ENCODE measurements at regions of chr6 and their contacts with region 1.

Region 1: DNA sequence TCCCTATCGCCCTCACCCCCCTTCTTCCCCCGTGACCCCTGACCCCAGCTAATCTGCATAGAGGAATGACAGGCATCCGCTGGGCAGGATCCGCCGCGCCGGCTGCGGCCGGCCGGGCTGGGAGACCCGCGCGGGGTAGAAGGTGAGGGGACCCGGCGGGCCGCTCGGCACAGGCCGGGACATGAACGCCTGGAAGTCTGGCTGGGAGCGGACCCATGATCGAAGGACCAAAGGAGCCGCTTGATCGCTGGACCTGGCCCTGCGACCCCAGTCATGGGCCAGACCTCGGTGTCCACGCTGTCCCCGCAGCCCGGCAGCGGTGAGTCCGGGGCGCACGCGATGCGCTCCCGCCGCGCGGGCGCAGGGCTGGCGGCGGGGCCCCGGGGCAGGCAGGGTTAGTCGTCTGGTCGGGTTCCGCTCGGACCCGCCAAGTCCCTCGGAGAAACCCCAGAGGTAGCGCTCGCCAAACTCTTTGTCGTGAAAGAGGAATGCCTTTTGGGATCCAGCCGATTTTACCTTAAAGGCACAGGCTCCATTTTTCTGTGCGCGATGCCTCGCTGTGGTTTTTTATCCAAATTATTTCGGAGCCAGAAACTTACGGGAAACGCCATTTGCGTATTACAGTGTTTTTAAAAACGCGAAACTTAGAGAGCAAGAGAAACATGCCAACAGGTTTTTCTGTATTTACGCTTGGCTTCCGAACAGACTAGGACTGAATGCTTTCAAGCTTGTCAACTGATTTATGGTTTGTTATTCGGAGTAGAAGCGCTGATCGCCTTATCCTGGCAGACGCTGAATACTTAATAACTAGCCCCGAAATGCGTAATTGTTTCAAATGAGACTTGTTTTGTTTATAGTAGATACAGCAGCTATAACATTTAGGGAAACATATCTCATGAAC is at the start of gene PHACTR2:
- DNase-seq: peak; percentile 89
- ATAC-seq: peak; percentile 92
- total RNA-seq, gene PHACTR2: 75.9 TPM

Region 2: DNA sequence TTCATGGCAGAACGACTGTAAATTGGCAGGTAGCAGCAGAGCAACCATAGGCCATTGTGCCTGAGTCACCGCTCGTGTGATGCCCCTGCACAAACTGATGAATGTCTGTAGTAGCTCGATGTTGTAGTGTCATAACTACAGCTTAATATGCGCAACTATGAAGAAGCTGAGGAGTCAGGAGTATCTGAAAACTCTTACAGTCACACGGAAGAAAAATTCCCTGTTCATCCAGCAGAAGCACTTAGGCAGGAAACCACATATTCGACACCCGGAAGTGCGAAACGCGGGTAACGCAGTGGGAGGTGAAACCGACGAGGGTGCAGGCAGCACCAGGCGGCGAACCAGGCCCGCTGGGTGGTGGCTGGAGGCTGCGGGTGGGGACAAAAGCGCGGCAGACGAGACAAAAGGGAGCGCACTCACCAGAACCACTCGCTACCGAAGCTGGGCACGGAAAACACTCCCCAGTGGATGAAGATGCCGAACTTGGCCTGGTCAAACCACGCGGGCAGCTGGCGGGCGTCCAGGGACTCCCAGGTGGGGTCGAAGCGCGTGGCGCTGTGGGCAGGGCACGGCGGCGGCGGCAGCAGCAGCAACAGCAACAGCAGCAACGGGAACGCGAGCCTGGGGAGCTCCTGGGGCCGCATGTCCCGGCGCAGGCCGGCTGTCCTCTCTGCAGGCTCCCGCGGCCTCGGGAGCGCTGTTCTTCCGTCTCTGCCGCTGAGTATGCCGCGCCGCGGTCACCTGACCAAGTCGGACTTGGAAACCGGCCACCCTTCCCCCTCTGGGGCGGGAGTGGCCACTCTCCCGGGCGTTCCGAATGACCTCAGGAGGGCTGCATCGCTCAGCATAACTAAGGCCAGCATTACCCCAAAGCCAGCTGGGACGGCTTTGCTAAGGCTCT is 166.9 kb before region 1 on chr6 and contains the start of gene FUCA2:
- intact Hi-C with region 1: no loop called
- DNase-seq: peak; percentile 96
- ATAC-seq: peak; percentile 92
- total RNA-seq, gene FUCA2: 46.1 TPM

Region 3: GRCh38 chr6:143598466-143599080 is 79.6 kb before region 1 on chr6:
- intact Hi-C with region 1: loop called (anchors 5 kb)
- DNase-seq: no peak
- ATAC-seq: no peak

Region 4: DNA sequence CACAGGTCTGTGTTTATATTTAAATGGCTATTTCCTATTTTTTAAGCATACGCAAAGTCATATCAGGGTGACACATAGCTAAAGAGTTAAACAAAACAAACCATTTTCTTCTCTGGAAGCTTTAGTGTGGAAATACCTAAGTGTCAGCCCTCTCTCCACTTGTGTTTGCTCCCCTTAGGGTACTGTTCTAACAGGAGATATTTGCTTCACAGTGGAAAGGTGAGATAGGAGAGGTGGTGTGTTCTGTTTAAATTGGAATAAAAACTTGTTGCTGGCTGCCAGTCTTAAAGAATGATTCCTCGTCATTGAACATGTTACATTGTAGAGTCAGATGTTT is 18.5 kb after region 1 on chr6:
- intact Hi-C with region 1: loop called (anchors 2 kb)
- DNase-seq: no peak
- ATAC-seq: no peak

Region 5: DNA sequence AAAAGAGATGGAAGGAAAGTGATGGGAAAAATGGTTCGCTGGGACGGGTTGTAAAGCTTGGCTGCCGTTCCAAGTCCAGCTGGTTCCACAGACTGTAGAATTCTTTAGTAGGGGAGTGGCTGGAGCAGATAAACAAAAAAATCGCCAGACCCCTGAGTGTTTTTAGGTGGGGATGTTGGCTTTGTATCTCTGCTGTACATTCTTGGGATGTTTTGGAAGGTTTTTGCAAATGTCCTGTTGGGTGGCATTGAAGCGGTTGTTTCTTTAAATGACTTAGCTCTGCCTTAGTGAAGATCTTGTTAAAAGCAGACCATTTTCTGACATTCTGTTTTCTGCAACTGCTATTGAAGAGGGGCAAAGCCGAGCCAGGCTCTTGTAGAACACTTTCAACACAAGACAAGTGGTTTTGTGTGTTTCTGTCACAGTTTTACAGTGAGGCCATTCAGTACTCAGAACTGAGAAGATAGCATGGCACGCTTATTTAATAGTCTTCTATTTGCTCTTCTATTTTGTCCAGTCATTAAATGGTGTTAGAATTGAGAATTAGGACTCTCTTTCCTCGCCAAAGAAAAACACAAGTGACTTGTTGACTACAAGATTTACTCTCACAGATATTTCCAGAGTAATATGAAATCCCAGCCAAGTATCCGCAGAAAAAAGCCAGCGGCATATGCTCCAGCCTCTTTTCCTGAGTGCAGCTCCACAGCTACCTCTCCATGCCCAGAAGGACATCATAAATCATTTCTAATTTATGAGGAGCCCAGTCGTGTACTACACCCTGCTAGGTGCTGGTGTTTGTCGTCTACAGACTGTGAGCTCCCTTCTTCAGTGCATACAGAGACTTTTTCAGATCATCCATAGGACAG is 65.4 kb after region 1 on chr6:
- intact Hi-C with region 1: loop called (anchors 5 kb)
- DNase-seq: no peak
- ATAC-seq: peak; percentile 41

Region 6: DNA sequence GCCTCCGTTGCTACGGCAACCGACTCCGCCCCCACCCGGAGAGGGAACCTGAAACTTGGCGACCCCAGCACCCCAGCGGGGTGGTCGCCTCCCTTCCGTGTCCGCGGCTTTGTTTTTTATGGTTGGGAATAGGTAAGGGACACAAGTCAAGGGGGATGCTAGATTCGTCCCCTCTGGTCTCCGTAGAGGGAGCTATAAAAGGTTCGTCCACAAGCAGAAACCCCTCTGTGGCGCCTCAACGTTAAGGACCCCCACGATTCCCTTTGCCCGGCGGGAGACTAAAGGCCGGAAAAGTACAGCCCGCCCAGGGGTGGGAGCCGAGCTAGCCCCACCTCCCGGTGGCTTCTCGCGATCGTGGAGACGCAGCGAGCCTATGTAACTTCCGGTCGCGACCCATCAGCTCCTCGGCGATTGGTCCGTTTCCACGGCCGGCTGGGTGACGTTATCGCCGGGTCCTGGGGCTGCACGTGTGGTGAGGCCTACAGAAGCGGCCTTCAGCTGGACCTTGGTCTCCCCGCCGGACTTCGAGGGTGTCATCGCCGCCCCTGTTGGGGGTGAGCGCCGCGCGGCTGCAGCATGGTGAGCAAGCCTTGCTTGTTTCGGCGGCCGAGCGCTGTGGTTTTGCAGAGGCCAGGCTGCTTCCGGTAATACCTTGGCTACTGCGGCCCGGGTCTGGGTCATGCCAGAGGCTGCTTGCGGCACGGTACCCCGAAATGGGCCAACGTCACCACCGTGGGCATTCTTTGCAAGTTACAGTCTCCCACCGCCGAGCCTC is 164.9 kb after region 1 on chr6 and contains the start of gene LTV1:
- intact Hi-C with region 1: loop called (anchors 1 kb)
- DNase-seq: peak; percentile 98
- ATAC-seq: peak; percentile 100
- total RNA-seq, gene LTV1: 12.4 TPM

Region 7: DNA sequence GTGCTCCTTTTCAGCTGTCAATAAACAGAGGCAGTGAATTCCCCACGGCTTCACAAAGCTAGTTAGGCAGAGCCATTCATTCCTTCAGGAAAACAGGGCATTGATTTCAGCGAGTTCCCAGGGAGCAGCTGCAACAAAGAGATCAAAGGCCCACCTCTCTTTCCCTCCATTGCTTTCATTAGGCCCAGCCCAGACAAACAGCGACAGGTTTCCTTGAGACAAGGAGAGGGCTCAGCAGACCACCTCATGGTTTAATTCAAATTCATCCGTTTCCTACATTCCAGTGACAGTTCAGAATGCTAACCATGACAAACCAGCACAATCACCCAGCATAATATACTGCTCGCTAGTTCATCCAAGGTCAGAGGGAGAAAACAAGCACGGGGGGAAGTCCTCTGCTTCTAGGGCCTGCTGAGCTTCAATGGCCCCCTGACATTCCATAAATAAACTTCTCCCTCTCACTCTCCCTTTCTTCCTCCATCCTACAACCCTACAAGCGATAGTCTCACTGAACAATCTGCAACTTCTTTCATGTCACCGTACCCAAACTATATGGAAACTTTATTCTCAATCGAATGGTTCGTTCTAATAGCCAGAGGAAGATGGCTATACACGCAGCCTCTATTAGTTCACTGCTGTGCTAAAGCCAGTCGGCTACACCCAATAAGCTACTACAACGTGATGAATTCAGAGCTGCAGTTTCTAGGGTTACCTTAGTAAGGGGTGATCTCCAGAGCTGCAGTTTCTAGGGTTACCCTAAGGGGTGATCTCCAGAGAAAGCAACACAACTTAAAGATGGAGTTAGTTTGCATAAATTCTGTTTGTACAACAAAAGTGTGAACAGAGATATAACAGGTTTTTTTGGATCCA is 295.2 kb after region 1 on chr6:
- intact Hi-C with region 1: no loop called
- DNase-seq: no peak
- ATAC-seq: no peak

Region 8: GRCh38 chr6:144008120-144008811 is 330.1 kb after region 1 on chr6 and contains the start of gene PLAGL1:
- intact Hi-C with region 1: loop called (anchors 5 kb)
- DNase-seq: peak; percentile 88
- ATAC-seq: peak; percentile 96
- total RNA-seq, gene PLAGL1: 13.1 TPM

Region 9: DNA sequence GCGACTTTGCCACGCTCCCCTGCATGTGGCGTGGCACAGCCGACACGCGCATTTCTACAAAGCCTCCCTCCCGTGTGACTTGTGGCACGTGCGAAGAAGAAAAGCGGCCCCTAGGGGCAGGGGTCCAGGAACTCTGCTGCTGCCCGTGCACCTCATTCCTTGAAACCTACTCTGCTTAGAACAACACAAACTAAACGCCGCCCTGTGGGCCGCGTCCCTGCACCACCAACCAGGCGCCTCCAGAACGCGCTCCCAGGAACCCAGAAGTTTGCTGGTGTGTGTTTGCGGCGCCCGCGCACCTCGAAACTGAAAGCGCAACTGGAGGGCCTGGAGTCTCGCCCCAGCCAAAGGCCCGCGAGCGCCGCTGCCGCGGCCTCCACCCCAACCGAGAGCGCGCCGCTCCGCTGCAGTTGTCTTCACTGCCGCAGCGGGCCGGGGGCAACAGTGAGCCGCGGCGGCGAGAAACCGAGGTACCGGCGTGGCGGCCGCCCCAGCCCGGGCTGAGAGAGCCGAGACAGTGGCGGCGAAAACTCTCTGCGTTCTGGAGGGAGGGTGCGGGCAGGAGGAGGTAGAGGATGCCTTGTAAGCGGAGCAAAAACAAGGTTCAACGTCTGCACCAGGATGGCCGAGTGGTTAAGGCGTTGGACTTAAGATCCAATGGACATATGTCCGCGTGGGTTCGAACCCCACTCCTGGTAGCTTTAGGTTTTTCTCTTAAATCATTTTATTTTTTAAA is 538.0 kb after region 1 on chr6:
- intact Hi-C with region 1: loop called (anchors 5 kb)
- DNase-seq: peak; percentile 96
- ATAC-seq: peak; percentile 94